HEK293T (cell line): ENCODE measurements at regions of chr16 and their contacts with region 1.

Region 1: DNA sequence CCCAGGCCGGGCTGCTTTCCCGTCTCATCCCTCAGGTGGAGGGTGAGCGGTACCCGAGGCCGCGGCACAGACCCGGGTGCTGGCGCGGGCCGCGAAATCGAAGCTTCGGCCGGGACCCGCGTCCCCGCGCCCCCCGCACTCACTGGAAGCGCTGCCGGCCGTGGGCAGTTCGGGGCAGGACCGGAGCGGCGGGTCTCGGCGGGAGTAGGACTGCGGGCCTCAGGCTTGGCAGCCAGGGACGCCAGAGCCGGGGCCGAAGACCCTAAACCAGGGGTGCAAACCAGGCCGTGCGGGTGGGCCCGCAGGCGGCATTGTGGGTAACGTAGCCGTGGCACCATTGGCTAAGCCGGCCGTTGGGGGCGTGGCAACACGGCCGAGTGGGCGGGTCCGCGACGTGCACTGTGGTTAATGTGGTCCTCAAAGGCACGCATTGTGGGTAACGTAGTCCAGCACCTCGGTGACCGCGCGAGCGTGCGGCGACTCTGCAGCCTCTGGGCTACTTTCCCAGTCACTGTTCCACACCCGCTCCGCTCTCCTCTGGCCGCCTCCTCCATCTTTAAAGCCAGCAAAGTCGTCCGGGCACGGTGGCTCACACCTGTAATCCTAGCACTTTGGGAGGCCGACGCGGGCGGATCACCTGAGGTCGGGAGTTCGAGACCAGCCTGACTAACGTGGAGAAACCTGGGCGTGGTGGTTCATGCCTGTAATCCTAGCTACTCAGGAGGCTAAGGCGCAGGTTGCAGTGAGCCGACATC is at the start of gene ZNF500:
- DNase-seq: peak; percentile 96

Region 2: DNA sequence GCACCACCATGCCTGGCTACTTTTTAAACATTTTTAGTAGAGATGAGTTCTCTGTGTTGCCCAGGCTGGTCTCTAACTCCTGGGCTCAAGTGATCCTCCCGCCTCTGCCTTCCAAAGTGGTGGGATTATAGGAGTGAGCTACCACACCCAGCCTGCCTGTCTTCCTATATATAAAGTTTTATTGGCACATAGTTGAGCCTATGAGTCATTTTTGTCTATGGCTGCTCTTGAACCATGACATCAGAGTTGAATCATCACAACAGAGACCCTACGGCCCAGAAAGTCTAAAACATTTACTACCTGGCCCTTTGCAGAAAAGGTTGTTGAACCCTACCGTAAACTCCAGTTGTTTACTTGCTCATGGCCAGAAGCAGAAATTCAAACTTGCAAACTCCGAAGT is 13.2 kb after region 1 on chr16:
- CTCF ChIA-PET with region 1: interaction called, 7 read pairs
- POLR2A ChIA-PET with region 1: interaction called, 12 read pairs
- DNase-seq: no peak

Region 3: GRCh38 chr16:4802659-4803287 is 35.7 kb after region 1 on chr16:
- CTCF ChIA-PET with region 1: no interaction called
- POLR2A ChIA-PET with region 1: interaction called, 18 read pairs
- DNase-seq: peak; percentile 97